ENCODE measurements at regions of chr6 and their contacts with region 1.

Region 1: GRCh38 chr6:43769526-43770416 is at the start of gene VEGFA:
- DNase-seq: peak; percentile 84 to 85
- ATAC-seq: peak; percentile 55 to 76
- H3K4me3 ChIP-seq: peak within 1 kb of the TSS; percentile 59
- H3K27ac ChIP-seq: peak within 1 kb of the TSS; percentile 97 to 100
- H3K4me1 ChIP-seq: peaks cover 14% of the 10 kb centered on the region
- CTCF ChIP-seq: peak; percentile 87
- EP300 ChIP-seq: no peak
- POLR2A ChIP-seq: peak; percentile 92
- RAD21 ChIP-seq: peak; percentile 92
- polyA plus RNA-seq, gene VEGFA: 83.7 and 101 TPM in 2 replicates

Region 2: GRCh38 chr6:43746613-43747102 is 23.1 kb before region 1 on chr6:
- CTCF ChIA-PET with region 1: interaction called, 26 read pairs
- POLR2A ChIA-PET with region 1: no interaction called
- DNase-seq: no peak
- ATAC-seq: no peak
- H3K4me3 ChIP-seq: no peak overlapping the region
- H3K27ac ChIP-seq: no peak overlapping the region; a peak in 1 of 6 replicates
- H3K4me1 ChIP-seq: peaks cover 9% of the 10 kb centered on the region; the same call in 2 of the 3 replicates
- CTCF ChIP-seq: no peak
- EP300 ChIP-seq: no peak
- POLR2A ChIP-seq: no peak
- RAD21 ChIP-seq: no peak

Region 3: GRCh38 chr6:43796903-43797888 is 27.4 kb after region 1 on chr6:
- CTCF ChIA-PET with region 1: interaction called, 24 read pairs
- POLR2A ChIA-PET with region 1: no interaction called
- DNase-seq: no peak
- ATAC-seq: no peak
- H3K4me3 ChIP-seq: no peak overlapping the region
- H3K27ac ChIP-seq: peak overlapping the region in 1 of 2 experiments; percentile 89; a peak in 4 of 6 replicates
- H3K4me1 ChIP-seq: peaks cover 25% of the 10 kb centered on the region
- CTCF ChIP-seq: no peak
- EP300 ChIP-seq: no peak
- POLR2A ChIP-seq: no peak
- RAD21 ChIP-seq: peak in 1 of 2 experiments; percentile 12; a peak in 1 of 5 replicates

Region 4: GRCh38 chr6:44002593-44003344 is 233.0 kb after region 1 on chr6:
- CTCF ChIA-PET with region 1: interaction called, 19 read pairs
- POLR2A ChIA-PET with region 1: interaction called, 14 read pairs
- DNase-seq: peak; percentile 55 to 76
- ATAC-seq: peak; percentile 72
- H3K4me3 ChIP-seq: peak overlapping the region; percentile 60
- H3K27ac ChIP-seq: peak overlapping the region; percentile 100
- H3K4me1 ChIP-seq: peaks cover 68% of the 10 kb centered on the region
- CTCF ChIP-seq: no peak
- EP300 ChIP-seq: no peak
- POLR2A ChIP-seq: no peak; the same call in 1 of the 2 replicates
- RAD21 ChIP-seq: peak in 1 of 2 experiments; percentile 39; a peak in 3 of 5 replicates

Region 5: GRCh38 chr6:44058617-44059358 is 289.0 kb after region 1 on chr6:
- CTCF ChIA-PET with region 1: interaction called, 15 read pairs
- POLR2A ChIA-PET with region 1: interaction called, 8 read pairs
- DNase-seq: peak; percentile 85 to 96
- ATAC-seq: peak; percentile 90 to 95
- H3K4me3 ChIP-seq: no peak overlapping the region
- H3K27ac ChIP-seq: peak overlapping the region; percentile 97 to 98
- H3K4me1 ChIP-seq: peaks cover 75% of the 10 kb centered on the region
- CTCF ChIP-seq: no peak
- EP300 ChIP-seq: peak; percentile 69 to 85; a peak in 2 of 5 replicates
- POLR2A ChIP-seq: no peak
- RAD21 ChIP-seq: peak in 1 of 2 experiments; percentile 50; a peak in 2 of 5 replicates

Measured in A549 (cell line).